Posterior cingulate gyrus (tissue), 11 donors: ENCODE measurements at regions of chr2 and their contacts with region 1.

Region 1: DNA sequence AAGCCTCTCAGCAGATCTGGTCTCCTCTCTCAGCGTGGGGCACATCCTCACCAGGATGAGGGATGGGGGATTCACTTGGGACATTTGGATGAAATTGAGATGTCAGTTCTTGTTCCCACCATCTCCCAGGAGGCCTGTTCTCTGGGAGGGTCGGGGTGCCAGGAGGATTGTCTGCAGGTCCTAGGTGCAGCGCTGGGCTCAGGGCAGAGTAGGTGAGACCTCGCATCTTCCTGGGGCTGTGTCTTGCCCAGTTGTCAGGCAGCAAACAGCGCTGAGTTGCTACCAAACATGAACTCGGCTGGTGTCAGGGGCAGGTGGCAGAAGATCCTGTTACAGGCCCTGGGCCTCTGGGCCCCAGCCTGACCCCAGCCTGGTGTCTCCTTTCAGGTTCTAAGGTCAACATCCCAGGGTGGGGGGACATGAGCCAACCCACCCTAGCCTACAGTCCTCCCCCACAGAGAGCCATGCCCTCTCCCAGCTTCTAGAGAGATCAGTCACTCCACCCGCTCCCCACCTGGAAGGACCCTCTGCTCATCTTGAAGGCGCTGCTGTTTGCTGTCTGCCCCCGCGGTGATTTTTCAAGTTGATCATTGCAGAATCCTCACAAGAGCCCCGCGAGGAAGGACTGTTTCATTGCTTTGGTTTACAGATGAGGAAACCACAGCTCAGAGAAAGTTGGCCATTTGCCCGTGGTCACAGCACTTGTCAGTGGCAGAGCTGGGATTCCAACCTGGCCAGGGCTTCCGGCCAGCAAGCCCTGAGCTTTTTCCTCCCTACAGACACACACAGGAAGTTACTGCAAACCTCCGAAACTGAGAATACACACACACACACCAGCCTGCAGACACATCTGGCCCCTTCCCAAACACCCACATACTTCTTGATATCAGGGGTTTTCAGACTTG is 83.9 kb downstream of the STPG4 start:
- DNase-seq: peak in 3 of 10 donors; percentile 31 to 54 (median 51)

Region 2: DNA sequence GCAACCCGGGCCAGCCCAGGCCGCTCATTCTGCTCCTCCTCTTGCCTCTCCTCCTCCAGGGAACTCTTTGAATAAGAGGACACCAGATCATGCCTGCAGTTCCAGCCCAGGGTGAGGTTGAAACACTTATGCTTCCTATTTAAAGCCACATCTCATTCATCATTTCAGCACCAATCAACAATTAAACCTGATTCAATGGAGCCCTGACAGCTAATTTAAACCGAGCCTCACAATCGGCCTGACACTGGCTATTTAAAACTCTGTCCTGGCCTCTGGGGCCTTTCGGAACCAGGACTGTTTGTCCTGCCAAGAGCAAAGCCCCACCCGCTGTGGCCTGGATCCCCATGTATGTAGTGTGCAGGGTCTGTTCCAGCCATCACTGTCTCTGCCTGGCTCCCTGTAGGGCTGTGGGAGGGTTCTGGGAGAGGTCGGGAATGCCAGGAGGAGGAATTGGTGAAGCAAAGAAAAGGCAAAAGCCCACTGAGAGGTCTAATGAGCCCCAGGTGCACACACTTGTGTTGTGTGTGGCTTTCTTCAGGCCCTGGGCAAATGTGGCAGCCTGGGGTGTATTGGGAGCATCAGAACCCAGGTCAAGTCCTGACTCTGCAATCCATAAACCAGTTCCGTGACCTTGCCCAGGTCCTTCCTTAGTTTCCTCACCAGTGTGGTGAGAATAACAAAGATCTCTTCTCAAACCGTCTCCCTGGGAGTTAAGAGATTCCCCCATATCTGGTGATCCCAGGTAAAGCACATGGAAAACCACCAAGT is 252.9 kb before region 1 on chr2:
- intact Hi-C with region 1: no loop called
- DNase-seq: peak in 3 of 10 donors; percentile 26 to 80 (median 33)

Region 3: GRCh38 chr2:47002480-47003381 is 68.4 kb before region 1 on chr2:
- intact Hi-C with region 1: no loop called
- DNase-seq: peak; percentile 67 to 97 (median 82)

Region 4: GRCh38 chr2:47016172-47016913 is 54.8 kb before region 1 on chr2:
- intact Hi-C with region 1: loop called (anchors 10 kb)
- DNase-seq: no peak

Region 5: GRCh38 chr2:47174733-47175361 is 103.7 kb after region 1 on chr2:
- intact Hi-C with region 1: loop called (anchors 5 kb)
- DNase-seq: no peak

Region 6: DNA sequence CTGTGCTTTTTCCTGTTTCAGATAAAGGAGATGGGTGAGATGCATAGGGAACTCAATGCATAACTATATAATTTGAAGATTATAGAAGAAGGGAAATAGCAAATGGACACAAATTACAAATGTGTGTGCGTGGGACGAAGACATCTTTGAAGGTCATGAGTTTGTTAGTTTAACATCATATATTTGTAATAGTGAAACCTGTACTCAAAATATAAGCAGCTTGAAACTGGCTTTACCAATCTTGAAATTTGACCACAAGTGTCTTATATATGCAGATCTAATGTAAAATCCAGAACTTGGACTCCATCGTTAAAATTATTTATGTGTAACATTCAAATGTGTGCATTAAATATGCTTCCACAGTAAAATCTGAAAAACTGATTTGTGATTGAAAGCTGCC is 315.4 kb after region 1 on chr2:
- intact Hi-C with region 1: no loop called
- DNase-seq: no peak